H1 (cell line): ENCODE measurements at regions of chr11 and their contacts with region 1.

Region 1: GRCh38 chr11:134139873-134140331 is 71.0 kb downstream of the JAM3 start:
- DNase-seq: peak; percentile 41 to 75
- H3K4me3 ChIP-seq: no peak overlapping the region
- H3K27ac ChIP-seq: no peak overlapping the region
- H3K4me1 ChIP-seq: no peaks in the 10 kb centered on the region
- H3K27me3 ChIP-seq: no peaks in the 10 kb centered on the region
- CTCF ChIP-seq: peak; percentile 50 to 93 (median 76)
- EP300 ChIP-seq: no peak
- POLR2A ChIP-seq: no peak
- RAD21 ChIP-seq: peak; percentile 90 to 93

Region 2: GRCh38 chr11:134110252-134110815 is 29.6 kb before region 1 on chr11:
- CTCF ChIA-PET with region 1: no interaction called
- POLR2A ChIA-PET with region 1: no interaction called
- DNase-seq: no peak
- H3K4me3 ChIP-seq: no peak overlapping the region
- H3K27ac ChIP-seq: no peak overlapping the region
- H3K4me1 ChIP-seq: peaks cover 0 to 4% (median under 1%) of the 10 kb centered on the region in 4 experiments; a peak in 2 of 7 replicates
- H3K27me3 ChIP-seq: no peaks in the 10 kb centered on the region
- CTCF ChIP-seq: no peak
- EP300 ChIP-seq: no peak
- POLR2A ChIP-seq: no peak
- RAD21 ChIP-seq: no peak

Region 3: DNA sequence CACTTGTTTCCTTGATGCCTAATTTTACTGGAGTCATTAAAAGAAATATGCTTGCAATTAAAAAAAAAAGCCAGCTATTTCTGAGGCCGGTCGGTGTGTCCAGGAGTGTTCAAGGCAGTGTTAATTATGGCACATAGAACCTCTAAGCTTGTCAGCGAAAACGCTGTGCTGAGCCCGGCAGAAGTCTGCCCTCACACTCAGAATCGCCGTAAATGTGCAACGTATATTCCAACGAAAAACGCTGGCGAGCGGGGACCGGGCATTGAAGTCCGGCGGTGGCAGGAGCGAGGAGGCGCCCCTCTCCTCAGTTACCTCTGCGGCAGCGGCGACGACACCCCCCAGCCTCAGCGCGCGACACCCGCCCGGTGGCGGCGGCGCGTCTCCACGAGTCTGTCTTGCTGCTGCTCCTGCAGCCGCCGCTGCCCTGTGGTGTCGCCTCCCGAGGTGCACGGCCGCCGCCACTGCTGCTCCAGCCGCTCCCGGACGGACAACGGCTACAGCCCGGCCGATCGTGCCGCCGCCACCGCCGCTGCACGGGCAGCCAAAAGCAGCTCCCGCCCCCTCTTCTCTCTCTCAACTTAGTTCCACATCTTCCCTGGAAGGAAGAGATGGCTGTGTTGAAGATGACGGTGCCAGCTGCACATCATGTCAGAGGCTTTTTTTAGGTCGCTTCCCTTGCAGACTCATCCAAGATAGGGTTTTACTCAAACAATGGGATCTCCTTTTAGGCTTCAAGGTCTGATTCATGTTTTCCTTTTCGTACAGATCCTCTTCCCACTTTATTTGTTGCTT is 15.0 kb before region 1 on chr11:
- CTCF ChIA-PET with region 1: interaction called, 12 read pairs
- POLR2A ChIA-PET with region 1: interaction called, 3 read pairs
- DNase-seq: peak in 1 of 2 experiments; percentile 73
- H3K4me3 ChIP-seq: peak overlapping the region; percentile 29 to 54 (median 32); a peak in 7 of 8 replicates
- H3K27ac ChIP-seq: no peak overlapping the region
- H3K4me1 ChIP-seq: peaks cover 0 to 16% (median 12%) of the 10 kb centered on the region in 4 experiments; a peak in 5 of 7 replicates
- H3K27me3 ChIP-seq: peaks cover 0 to 10% (median 5%) of the 10 kb centered on the region in 4 experiments; a peak in 3 of 7 replicates
- CTCF ChIP-seq: no peak
- EP300 ChIP-seq: no peak
- POLR2A ChIP-seq: no peak
- RAD21 ChIP-seq: no peak; a peak in 1 of 4 replicates